ENCODE measurements at regions of chr4 and their contacts with region 1.

Region 1: GRCh38 chr4:10116580-10117358 is at the start of gene WDR1:
- DNase-seq: peak; percentile 82 to 98 (median 92)
- ATAC-seq: peak; percentile 64
- H3K4me3 ChIP-seq: peak within 1 kb of the TSS; percentile 90
- H3K4me3 Mint-ChIP-seq: peak within 1 kb of the TSS; percentile 99
- H3K27ac ChIP-seq: peak within 1 kb of the TSS; percentile 96 to 98
- H3K27ac Mint-ChIP-seq: peak within 1 kb of the TSS; percentile 99
- H3K4me1 ChIP-seq: peaks cover 85% of the 10 kb centered on the region
- H3K4me1 Mint-ChIP-seq: peaks cover 91% of the 10 kb centered on the region
- H3K27me3 ChIP-seq: no peaks in the 10 kb centered on the region
- H3K27me3 Mint-ChIP-seq: no peaks in the 10 kb centered on the region
- CTCF ChIP-seq: no peak
- total RNA-seq, gene WDR1: 197 to 198 TPM

Region 2: GRCh38 chr4:9691238-9692065 is 425.3 kb before region 1 on chr4:
- CTCF ChIA-PET with region 1: no interaction called
- POLR2A ChIA-PET with region 1: interaction called, 14 read pairs
- intact Hi-C with region 1: loop called in 1 of 2 experiments (anchors 10 kb)
- DNase-seq: peak; percentile 77 to 97 (median 88)
- ATAC-seq: peak; percentile 99
- H3K4me3 ChIP-seq: peak overlapping the region; percentile 72
- H3K4me3 Mint-ChIP-seq: peak overlapping the region; percentile 92
- H3K27ac ChIP-seq: peak overlapping the region; percentile 67 to 73
- H3K27ac Mint-ChIP-seq: peak overlapping the region; percentile 85
- H3K4me1 ChIP-seq: peaks cover 8% of the 10 kb centered on the region
- H3K4me1 Mint-ChIP-seq: peaks cover 26% of the 10 kb centered on the region
- H3K27me3 ChIP-seq: no peaks in the 10 kb centered on the region
- H3K27me3 Mint-ChIP-seq: no peaks in the 10 kb centered on the region
- CTCF ChIP-seq: no peak

Region 3: GRCh38 chr4:10106421-10107039 is 10.2 kb before region 1 on chr4:
- CTCF ChIA-PET with region 1: interaction called, 5 read pairs
- POLR2A ChIA-PET with region 1: interaction called, 61 read pairs
- intact Hi-C with region 1: no loop called
- DNase-seq: peak in 13 of 14 experiments; percentile 47 to 86 (median 67)
- ATAC-seq: peak; percentile 78
- H3K4me3 ChIP-seq: peak overlapping the region; percentile 3
- H3K4me3 Mint-ChIP-seq: peak overlapping the region; percentile 74
- H3K27ac ChIP-seq: peak overlapping the region; percentile 69 to 74
- H3K27ac Mint-ChIP-seq: peak overlapping the region; percentile 99
- H3K4me1 ChIP-seq: peaks cover 100% of the 10 kb centered on the region
- H3K4me1 Mint-ChIP-seq: peaks cover 100% of the 10 kb centered on the region
- H3K27me3 ChIP-seq: no peaks in the 10 kb centered on the region
- H3K27me3 Mint-ChIP-seq: no peaks in the 10 kb centered on the region
- CTCF ChIP-seq: no peak

Region 4: GRCh38 chr4:10157478-10158332 is 40.9 kb after region 1 on chr4:
- CTCF ChIA-PET with region 1: interaction called, 3 read pairs
- POLR2A ChIA-PET with region 1: interaction called, 25 read pairs
- intact Hi-C with region 1: loop called in 1 of 2 experiments (anchors 5 kb)
- DNase-seq: peak in 9 of 14 experiments; percentile 4 to 68 (median 40)
- ATAC-seq: peak; percentile 38
- H3K4me3 ChIP-seq: no peak overlapping the region
- H3K4me3 Mint-ChIP-seq: no peak overlapping the region
- H3K27ac ChIP-seq: no peak overlapping the region
- H3K27ac Mint-ChIP-seq: peak overlapping the region; percentile 65
- H3K4me1 ChIP-seq: peaks cover 36% of the 10 kb centered on the region
- H3K4me1 Mint-ChIP-seq: peaks cover 37% of the 10 kb centered on the region
- H3K27me3 ChIP-seq: no peaks in the 10 kb centered on the region
- H3K27me3 Mint-ChIP-seq: no peaks in the 10 kb centered on the region
- CTCF ChIP-seq: peak; percentile 67

Region 5: DNA sequence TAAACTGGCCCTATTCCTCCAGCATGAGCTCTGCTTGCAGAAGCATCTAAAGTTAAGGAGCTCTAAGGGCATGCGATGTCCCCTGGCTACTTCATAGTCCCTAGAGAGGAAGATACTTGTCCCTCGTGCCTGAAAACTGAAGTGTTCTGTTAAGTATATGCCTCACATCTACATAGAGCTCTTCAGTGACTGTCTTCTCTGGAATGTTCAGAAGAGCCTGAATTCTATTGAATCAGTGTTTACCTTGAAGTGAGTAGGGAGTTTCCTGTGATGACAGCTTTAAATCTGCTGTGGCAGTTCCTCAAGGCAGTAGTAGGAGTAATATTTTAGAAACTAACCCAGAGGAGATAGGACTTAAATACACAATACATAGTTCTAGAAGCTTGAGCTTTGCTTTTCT is 229.3 kb after region 1 on chr4:
- CTCF ChIA-PET with region 1: no interaction called
- POLR2A ChIA-PET with region 1: no interaction called
- intact Hi-C with region 1: no loop called
- DNase-seq: no peak
- ATAC-seq: no peak
- H3K4me3 ChIP-seq: no peak overlapping the region
- H3K4me3 Mint-ChIP-seq: no peak overlapping the region
- H3K27ac ChIP-seq: no peak overlapping the region
- H3K27ac Mint-ChIP-seq: no peak overlapping the region
- H3K4me1 ChIP-seq: no peaks in the 10 kb centered on the region
- H3K4me1 Mint-ChIP-seq: no peaks in the 10 kb centered on the region
- H3K27me3 ChIP-seq: no peaks in the 10 kb centered on the region
- H3K27me3 Mint-ChIP-seq: peaks cover 16% of the 10 kb centered on the region
- CTCF ChIP-seq: no peak

Region 6: DNA sequence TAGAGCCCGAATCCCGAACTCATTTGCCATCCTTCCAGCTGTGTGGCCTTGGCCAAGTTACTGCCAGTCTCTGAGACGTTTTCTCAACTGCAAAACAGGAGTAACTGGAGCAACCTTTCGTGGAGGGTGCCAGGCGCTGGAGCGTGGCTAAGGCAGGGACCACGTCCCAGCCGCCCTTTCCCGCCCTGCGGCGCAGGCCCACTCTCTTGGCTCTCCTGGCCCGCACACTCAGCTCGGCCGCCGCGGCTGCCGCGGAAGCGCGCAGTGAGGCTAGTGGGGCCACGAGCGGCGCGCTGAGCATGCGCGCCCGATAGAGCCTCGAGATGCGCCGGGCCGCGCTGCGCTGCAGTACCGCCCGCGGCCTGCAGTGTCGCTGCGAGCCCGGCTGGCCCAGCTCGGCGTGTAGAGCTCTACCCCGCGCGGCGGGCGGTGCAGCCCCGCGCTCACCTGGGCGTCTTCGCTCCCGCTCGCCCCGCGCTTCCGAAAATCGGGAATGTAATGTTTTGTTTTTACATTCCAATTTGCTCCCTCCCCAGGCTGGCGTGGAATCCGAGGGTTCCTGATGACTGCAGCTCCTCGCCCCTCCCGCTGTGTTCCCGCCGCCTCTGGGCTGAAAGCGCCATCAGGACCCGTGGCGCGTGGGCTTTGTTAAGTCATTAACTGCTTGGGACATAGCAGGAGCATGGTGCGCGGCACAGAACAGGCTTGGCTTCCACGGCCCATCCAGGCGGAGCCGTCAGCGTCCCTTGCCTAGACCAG is 344.5 kb after region 1 on chr4:
- CTCF ChIA-PET with region 1: interaction called, 4 read pairs
- POLR2A ChIA-PET with region 1: interaction called, 60 read pairs
- intact Hi-C with region 1: loop called in 1 of 2 experiments (anchors 2 kb)
- DNase-seq: peak; percentile 41 to 93 (median 70)
- ATAC-seq: peak; percentile 83
- H3K4me3 ChIP-seq: peak overlapping the region; percentile 62
- H3K4me3 Mint-ChIP-seq: peak overlapping the region; percentile 83
- H3K27ac ChIP-seq: no peak overlapping the region
- H3K27ac Mint-ChIP-seq: no peak overlapping the region
- H3K4me1 ChIP-seq: peaks cover 32% of the 10 kb centered on the region
- H3K4me1 Mint-ChIP-seq: peaks cover 26% of the 10 kb centered on the region
- H3K27me3 ChIP-seq: peaks cover 12 to 14% of the 10 kb centered on the region in 2 experiments
- H3K27me3 Mint-ChIP-seq: peaks cover 41% of the 10 kb centered on the region
- CTCF ChIP-seq: peak; percentile 95

Region 7: GRCh38 chr4:10743357-10743756 is 626.6 kb after region 1 on chr4:
- CTCF ChIA-PET with region 1: no interaction called
- POLR2A ChIA-PET with region 1: no interaction called
- intact Hi-C with region 1: no loop called
- DNase-seq: no peak
- ATAC-seq: no peak
- H3K4me3 ChIP-seq: no peak overlapping the region
- H3K4me3 Mint-ChIP-seq: no peak overlapping the region
- H3K27ac ChIP-seq: no peak overlapping the region
- H3K27ac Mint-ChIP-seq: no peak overlapping the region
- H3K4me1 ChIP-seq: no peaks in the 10 kb centered on the region
- H3K4me1 Mint-ChIP-seq: no peaks in the 10 kb centered on the region
- H3K27me3 ChIP-seq: no peaks in the 10 kb centered on the region
- H3K27me3 Mint-ChIP-seq: no peaks in the 10 kb centered on the region
- CTCF ChIP-seq: no peak